Mammary epithelial cell (primary cell): ENCODE measurements at regions of chr1 and their contacts with region 1.

Region 1: GRCh38 chr1:171781176-171781875 is at the start of gene METTL13:
- DNase-seq: peak; percentile 100
- H3K4me3 ChIP-seq: peak within 1 kb of the TSS; percentile 86 to 91 (median 88)
- H3K27ac ChIP-seq: peak within 1 kb of the TSS; percentile 80
- H3K4me1 ChIP-seq: peaks cover 23% of the 10 kb centered on the region
- H3K27me3 ChIP-seq: no peaks in the 10 kb centered on the region
- CTCF ChIP-seq: no peak
- total RNA-seq, gene METTL13: 21.5 to 31.6 TPM

Region 2: DNA sequence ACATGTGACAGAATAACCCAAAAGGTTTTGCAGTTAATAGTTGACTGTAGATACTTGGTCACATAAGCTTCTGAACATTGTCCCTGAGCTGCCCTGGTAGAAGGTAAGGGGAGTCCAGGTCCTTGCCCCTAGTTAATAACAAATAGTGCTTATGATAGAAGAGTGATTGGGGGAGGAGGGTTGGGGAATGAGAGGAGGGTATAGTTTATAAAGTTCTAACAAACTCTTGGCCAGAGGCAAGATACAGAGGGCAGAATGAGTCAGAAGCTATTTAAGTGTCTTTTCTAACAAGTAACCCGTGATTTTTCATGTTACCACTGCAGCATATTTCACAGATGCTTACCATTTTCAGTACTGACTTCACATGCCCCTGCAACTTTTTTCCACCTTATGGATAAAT is 186.0 kb before region 1 on chr1:
- CTCF ChIA-PET with region 1: no interaction called
- dilution Hi-C with region 1: no loop called
- in situ Hi-C with region 1: no loop called
- intact Hi-C with region 1: no loop called
- DNase-seq: no peak
- H3K4me3 ChIP-seq: no peak overlapping the region
- H3K27ac ChIP-seq: no peak overlapping the region
- H3K4me1 ChIP-seq: no peaks in the 10 kb centered on the region
- H3K27me3 ChIP-seq: no peaks in the 10 kb centered on the region
- CTCF ChIP-seq: no peak

Region 3: GRCh38 chr1:171730052-171730451 is 51.3 kb before region 1 on chr1:
- CTCF ChIA-PET with region 1: no interaction called
- dilution Hi-C with region 1: no loop called
- in situ Hi-C with region 1: no loop called
- intact Hi-C with region 1: no loop called
- DNase-seq: no peak
- H3K4me3 ChIP-seq: no peak overlapping the region
- H3K27ac ChIP-seq: no peak overlapping the region
- H3K4me1 ChIP-seq: no peaks in the 10 kb centered on the region
- H3K27me3 ChIP-seq: no peaks in the 10 kb centered on the region
- CTCF ChIP-seq: no peak

Region 4: DNA sequence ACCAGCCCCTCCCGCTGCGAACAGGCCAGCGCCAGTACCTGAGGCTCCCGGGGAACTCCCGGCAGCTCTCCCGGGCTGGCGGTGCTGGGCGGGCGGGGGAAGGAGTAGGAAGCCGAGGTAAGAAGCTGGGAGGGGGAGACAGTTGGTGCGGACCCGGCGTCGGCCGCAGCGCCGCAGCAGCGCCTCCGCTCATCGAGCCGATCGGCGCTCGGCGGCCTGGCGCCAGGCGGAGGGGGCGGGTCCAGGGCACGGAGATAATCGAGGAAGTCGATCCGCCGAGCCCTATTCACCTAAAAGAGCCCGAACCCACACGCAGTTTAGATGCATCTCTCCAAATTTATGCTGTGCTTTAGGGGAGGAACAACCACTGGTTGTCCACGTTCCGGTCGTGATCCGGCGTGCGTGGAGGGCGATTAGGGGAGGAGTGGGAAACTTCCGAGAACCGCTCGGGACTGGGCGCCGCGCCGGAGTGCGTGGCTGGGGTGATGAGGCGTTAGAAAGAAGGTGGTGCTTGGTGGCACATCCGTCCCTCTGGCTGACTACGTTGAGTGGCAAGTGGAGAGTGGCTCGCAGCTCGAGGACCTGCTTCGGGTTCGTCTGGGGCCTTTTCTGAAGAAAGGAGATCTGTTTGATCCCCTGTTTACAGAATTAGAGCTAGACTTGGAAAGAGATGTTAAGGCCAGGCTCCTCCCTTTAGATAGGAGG is 39.3 kb before region 1 on chr1 and contains the start of gene VAMP4:
- CTCF ChIA-PET with region 1: no interaction called
- dilution Hi-C with region 1: no loop called
- in situ Hi-C with region 1: no loop called
- intact Hi-C with region 1: loop called (anchors 1 kb)
- DNase-seq: peak; percentile 85
- H3K4me3 ChIP-seq: peak within 1 kb of the TSS; percentile 49 to 91 (median 77)
- H3K27ac ChIP-seq: peak within 1 kb of the TSS; percentile 93
- H3K4me1 ChIP-seq: peaks cover 35% of the 10 kb centered on the region
- H3K27me3 ChIP-seq: no peaks in the 10 kb centered on the region
- CTCF ChIP-seq: no peak
- total RNA-seq, gene VAMP4: 6.7 to 13.8 TPM

Region 5: GRCh38 chr1:171754353-171754705 is 27.0 kb before region 1 on chr1:
- CTCF ChIA-PET with region 1: no interaction called
- dilution Hi-C with region 1: no loop called
- in situ Hi-C with region 1: no loop called
- intact Hi-C with region 1: loop called (anchors 2 kb)
- DNase-seq: peak; percentile 75
- H3K4me3 ChIP-seq: no peak overlapping the region
- H3K27ac ChIP-seq: peak overlapping the region; percentile 37
- H3K4me1 ChIP-seq: peaks cover 26% of the 10 kb centered on the region
- H3K27me3 ChIP-seq: no peaks in the 10 kb centered on the region
- CTCF ChIP-seq: no peak

Region 6: DNA sequence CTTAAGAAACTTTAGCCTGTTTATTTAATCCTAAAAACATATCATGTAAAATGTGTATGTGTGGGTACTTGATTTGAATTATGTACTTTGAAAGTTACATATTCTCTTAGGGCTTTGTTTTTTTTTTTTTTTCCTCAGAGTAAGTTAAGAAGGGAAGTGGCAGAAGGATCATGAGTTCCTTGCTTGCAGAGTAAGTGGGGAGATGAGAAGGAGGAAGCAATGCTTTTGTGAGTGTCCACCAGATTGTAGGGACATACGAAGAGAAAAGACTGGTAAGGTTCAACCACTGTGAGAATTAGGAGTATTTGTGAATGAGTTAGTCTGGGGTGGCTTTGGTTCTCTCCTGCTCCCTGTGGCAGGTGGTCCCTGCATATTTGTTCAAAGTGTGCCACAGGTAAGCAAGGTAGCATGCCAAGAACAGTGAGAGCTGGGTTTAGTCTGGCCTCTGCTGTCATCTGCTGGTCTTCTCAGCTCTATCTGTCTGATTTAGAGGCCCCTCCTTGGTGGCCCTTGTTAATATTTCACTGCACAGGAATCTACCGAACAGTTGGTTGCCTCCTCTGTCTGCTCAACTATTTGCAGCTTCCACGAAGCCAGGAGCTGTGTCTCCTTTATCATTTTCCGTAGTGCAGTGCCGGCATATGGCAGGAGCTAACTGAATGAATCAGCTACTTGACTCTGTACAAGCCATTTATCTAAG is 69.5 kb after region 1 on chr1:
- CTCF ChIA-PET with region 1: no interaction called
- dilution Hi-C with region 1: no loop called
- in situ Hi-C with region 1: no loop called
- intact Hi-C with region 1: no loop called
- DNase-seq: no peak
- H3K4me3 ChIP-seq: no peak overlapping the region
- H3K27ac ChIP-seq: no peak overlapping the region
- H3K4me1 ChIP-seq: no peaks in the 10 kb centered on the region
- H3K27me3 ChIP-seq: no peaks in the 10 kb centered on the region
- CTCF ChIP-seq: peak in 1 of 2 donors; percentile 14